ENCODE measurements at regions of chr1 and their contacts with region 1.

Region 1: GRCh38 chr1:92623187-92623778 is 136.6 kb upstream of the GFI1 start:
- DNase-seq: peak; percentile 42
- H3K4me3 ChIP-seq: no peak overlapping the region
- H3K27ac ChIP-seq: no peak overlapping the region
- H3K4me1 ChIP-seq: no peaks in the 10 kb centered on the region
- H3K27me3 ChIP-seq: no peaks in the 10 kb centered on the region
- CTCF ChIP-seq: peak; percentile 59

Region 2: DNA sequence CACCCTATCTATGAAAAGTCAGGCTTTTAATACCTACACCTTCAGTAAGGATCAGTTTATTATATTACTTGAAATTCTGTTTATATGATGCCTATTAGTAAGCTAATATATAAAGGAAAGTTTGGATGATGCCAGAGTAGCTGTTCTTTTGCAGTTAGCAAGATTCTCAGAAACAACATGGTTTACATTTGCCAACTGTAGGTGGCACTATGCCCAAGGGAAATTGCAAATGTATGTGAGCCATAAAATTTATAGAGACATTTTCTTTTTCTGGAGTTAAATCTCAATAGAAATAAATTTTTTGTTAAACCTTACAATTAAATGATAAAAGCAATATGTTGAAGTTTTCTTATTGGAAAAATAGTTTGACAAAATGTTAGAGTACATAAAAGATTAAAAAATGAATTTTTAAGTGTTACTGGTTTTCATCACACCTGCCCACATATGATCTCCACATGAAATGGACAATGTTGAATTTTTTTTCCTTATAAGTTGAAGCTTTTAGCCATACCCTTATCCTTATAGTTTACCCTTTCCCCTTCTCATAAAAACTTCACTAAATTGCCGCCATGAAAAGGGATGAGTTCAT is 625.6 kb before region 1 on chr1:
- CTCF ChIA-PET with region 1: no interaction called
- POLR2A ChIA-PET with region 1: no interaction called
- intact Hi-C with region 1: loop called (anchors 10 kb)
- DNase-seq: peak; percentile 72
- H3K4me3 ChIP-seq: no peak overlapping the region
- H3K27ac ChIP-seq: no peak overlapping the region
- H3K4me1 ChIP-seq: no peaks in the 10 kb centered on the region
- H3K27me3 ChIP-seq: no peaks in the 10 kb centered on the region
- CTCF ChIP-seq: peak; percentile 77

Region 3: GRCh38 chr1:92310185-92310597 is 313.1 kb before region 1 on chr1:
- CTCF ChIA-PET with region 1: no interaction called
- POLR2A ChIA-PET with region 1: no interaction called
- intact Hi-C with region 1: loop called (anchors 5 kb)
- DNase-seq: peak; percentile 52
- H3K4me3 ChIP-seq: no peak overlapping the region
- H3K27ac ChIP-seq: no peak overlapping the region
- H3K4me1 ChIP-seq: no peaks in the 10 kb centered on the region
- H3K27me3 ChIP-seq: no peaks in the 10 kb centered on the region
- CTCF ChIP-seq: peak; percentile 64

Region 4: GRCh38 chr1:92551916-92552315 is 71.4 kb before region 1 on chr1:
- CTCF ChIA-PET with region 1: no interaction called
- POLR2A ChIA-PET with region 1: no interaction called
- intact Hi-C with region 1: no loop called
- DNase-seq: no peak
- H3K4me3 ChIP-seq: no peak overlapping the region
- H3K27ac ChIP-seq: no peak overlapping the region
- H3K4me1 ChIP-seq: no peaks in the 10 kb centered on the region
- H3K27me3 ChIP-seq: no peaks in the 10 kb centered on the region
- CTCF ChIP-seq: no peak

Measured in A673 (cell line).